ENCODE measurements at regions of chr19 and their contacts with region 1.

Region 1: DNA sequence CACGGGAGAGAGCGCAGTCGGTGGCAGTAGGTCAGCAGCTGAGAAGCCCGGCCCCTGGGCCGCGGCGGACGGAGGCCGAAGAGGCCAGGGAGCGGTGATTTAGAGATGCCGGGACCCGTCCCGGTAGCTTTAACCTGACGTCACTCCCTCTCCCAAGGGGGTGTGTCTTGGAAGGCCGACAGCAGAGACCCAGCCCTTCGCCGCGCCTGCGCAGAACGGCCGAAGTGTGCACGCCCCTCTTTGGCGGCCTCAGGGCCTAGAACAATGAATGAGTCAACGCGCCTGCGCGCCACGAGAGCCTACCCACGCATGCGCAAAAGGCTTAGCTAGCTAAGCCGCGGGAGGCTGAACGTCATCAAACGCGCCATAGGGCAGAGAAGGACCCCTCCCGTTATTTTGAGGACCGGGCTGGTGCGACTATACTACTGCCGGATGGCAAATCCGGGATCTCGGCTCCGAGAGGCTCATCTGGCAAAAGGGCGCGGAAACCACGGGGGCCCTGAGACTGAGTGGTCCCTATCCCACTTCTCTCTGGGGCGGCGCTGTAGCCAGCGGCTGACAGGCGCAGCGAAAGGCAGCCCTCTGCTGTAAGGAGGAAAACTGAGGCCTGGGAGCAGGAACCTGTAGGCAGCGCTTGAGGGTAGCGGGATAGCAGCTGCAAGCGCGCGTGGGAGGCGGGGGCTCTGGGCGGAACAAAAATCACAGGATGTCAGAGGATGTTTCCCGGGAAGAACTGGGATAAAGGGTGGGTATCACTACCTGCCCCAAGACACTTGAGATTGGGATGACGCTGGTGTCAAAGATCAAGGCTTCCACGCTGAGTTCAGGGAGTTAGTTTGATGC is at the starts of genes IRGQ and ZNF576:
- DNase-seq: peak; percentile 100
- H3K4me3 Mint-ChIP-seq: peak within 1 kb of the TSS; percentile 93
- H3K27ac Mint-ChIP-seq: peak within 1 kb of the TSS; percentile 97
- H3K4me1 Mint-ChIP-seq: peaks cover 29% of the 10 kb centered on the region
- H3K27me3 Mint-ChIP-seq: no peaks in the 10 kb centered on the region
- total RNA-seq, gene IRGQ: 17.2 to 18.7 TPM
- total RNA-seq, gene ZNF576: 11.6 to 11.7 TPM

Region 2: DNA sequence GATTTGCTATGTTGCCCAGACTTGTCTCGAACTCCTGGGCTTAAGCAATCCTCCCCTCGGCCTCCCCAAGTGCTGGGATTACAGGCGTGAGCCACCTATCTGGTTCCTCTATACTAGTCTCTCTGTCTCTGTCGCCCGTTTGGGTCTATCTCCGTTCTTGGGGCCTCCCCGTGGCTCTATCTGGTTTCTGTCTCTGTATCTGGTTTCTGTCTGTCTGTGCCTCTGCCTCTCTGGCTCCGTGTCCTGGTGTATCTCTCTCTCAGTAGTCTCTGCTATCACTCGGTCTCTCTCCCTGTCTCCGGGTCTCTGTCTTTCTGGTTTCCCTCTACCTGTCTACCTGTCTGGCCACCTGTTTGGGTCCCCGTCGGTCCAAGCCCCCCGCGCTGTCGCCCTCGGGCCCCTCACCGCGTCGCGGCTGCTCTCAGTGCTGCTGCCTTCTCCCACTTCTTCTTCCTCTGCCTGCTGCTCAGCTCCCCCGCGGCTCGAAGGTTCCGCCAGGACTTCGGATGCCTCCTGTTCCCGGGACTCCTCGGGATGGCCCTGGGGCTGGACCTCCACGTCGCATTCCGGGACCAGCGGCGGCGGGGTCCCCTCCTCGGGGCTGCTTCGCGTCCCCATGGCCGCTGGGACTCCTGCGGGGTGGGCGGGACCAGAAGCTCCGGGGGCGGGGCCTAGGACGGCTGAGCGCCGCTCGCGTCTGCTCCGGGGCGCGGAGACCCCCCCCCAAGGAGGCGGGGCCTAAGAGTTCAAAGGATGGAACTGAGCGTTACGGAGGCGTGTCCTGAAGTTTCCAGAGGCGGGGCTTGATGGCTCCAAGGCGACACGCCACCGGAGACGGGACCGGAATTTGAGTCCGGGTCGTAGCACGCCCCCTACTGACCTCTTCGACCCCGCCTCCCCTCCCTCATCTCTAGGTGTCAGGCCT is 92.5 kb before region 1 on chr19:
- CTCF ChIA-PET with region 1: interaction called, 3 read pairs
- intact Hi-C with region 1: loop called (anchors 1 kb)
- DNase-seq: peak; percentile 99
- H3K4me3 Mint-ChIP-seq: peak overlapping the region; percentile 97
- H3K27ac Mint-ChIP-seq: peak overlapping the region; percentile 92
- H3K4me1 Mint-ChIP-seq: peaks cover 29% of the 10 kb centered on the region
- H3K27me3 Mint-ChIP-seq: no peaks in the 10 kb centered on the region

Region 3: GRCh38 chr19:43532962-43533545 is 63.2 kb before region 1 on chr19 and contains the start of gene ZNF575:
- CTCF ChIA-PET with region 1: interaction called, 24 read pairs
- intact Hi-C with region 1: loop called (anchors 1 kb)
- DNase-seq: peak; percentile 92
- H3K4me3 Mint-ChIP-seq: peak within 1 kb of the TSS; percentile 80
- H3K27ac Mint-ChIP-seq: peak within 1 kb of the TSS; percentile 88
- H3K4me1 Mint-ChIP-seq: peaks cover 19% of the 10 kb centered on the region
- H3K27me3 Mint-ChIP-seq: no peaks in the 10 kb centered on the region
- total RNA-seq, gene ZNF575: 3.1 to 5.2 TPM

Region 4: DNA sequence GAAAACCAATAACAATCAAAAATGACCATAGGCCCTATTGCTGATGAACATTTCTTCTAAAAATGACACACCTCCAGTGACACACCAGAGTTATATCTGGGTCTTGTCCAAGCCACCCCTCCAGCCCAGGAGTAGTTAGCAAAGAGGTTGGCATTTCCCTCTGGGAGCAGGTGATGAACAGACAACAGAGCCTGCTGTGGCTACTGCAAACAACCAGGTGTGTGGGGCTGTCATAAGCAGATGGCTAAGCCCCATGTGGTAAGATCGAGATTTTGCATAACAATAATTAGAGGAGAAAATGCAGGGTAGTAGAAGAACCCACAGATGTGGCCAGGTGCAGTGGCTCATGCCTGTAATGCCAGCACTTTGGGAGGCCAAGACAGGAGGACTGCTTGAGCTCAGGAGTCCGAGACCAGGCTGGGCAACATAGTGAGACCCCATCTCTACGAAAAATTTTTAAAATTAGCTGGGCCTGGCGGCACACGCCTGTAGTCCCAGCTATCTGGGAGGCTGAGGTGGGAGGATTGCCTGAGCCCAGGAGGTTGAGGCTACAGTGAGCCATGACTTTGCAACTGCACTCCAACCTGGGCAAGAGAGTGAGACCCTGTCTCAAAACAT is 25.9 kb before region 1 on chr19:
- CTCF ChIA-PET with region 1: interaction called, 29 read pairs
- intact Hi-C with region 1: loop called (anchors 1 kb)
- DNase-seq: no peak
- H3K4me3 Mint-ChIP-seq: no peak overlapping the region
- H3K27ac Mint-ChIP-seq: no peak overlapping the region
- H3K4me1 Mint-ChIP-seq: peaks cover 22% of the 10 kb centered on the region
- H3K27me3 Mint-ChIP-seq: no peaks in the 10 kb centered on the region

Region 5: GRCh38 chr19:43612374-43612773 is 16.2 kb after region 1 on chr19:
- CTCF ChIA-PET with region 1: no interaction called
- intact Hi-C with region 1: no loop called
- DNase-seq: no peak
- H3K4me3 Mint-ChIP-seq: no peak overlapping the region
- H3K27ac Mint-ChIP-seq: no peak overlapping the region
- H3K4me1 Mint-ChIP-seq: peaks cover 11% of the 10 kb centered on the region
- H3K27me3 Mint-ChIP-seq: no peaks in the 10 kb centered on the region

Region 6: GRCh38 chr19:43668406-43669158 is 72.4 kb after region 1 on chr19:
- CTCF ChIA-PET with region 1: interaction called, 6 read pairs
- intact Hi-C with region 1: loop called (anchors 1 kb)
- DNase-seq: no peak
- H3K4me3 Mint-ChIP-seq: peak overlapping the region; percentile 82
- H3K27ac Mint-ChIP-seq: peak overlapping the region; percentile 77
- H3K4me1 Mint-ChIP-seq: peaks cover 50% of the 10 kb centered on the region
- H3K27me3 Mint-ChIP-seq: no peaks in the 10 kb centered on the region

Region 7: DNA sequence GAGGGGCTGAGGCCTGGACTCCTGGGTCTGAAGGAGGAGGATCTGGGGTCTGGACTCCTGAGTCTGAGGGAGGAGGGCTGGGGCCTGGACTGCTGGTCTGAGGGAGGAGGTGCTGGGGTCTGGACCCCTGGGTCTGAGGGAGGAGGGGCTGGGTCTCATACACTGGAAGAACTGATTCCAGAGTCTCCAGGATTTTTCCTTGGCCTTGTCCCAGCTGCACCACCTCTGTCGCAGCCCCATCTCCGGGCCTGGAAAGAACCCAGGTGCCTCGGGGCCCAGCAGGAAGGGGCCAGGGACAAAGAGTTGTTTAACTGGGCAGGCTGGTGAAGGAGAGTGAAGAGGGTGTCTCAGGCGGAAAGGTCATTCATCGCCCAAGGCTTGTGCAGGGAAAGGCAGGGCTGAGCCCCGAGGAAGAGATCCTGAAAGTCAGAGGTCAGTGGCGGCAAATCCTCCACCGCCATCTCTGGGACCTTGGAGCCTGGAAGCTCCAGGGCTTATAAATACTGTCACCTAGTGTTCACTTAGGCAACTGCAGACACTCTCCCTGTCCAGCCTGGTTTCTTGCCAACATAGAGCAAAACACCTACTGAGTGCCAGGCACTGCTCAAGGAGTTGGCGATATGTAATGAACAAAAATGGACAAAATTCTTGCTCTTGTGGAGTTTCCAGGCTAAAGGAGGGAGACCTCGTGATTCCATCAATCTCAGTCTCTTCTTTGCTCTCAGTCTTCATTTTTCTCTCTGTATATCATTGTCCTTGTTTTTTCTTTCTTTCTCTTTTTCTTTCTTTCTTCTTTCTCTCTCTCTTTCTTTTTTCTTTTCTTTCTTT is 189.0 kb after region 1 on chr19:
- CTCF ChIA-PET with region 1: no interaction called
- intact Hi-C with region 1: loop called (anchors 1 kb)
- DNase-seq: peak; percentile 75
- H3K4me3 Mint-ChIP-seq: peak overlapping the region; percentile 66
- H3K27ac Mint-ChIP-seq: peak overlapping the region; percentile 95
- H3K4me1 Mint-ChIP-seq: peaks cover 39% of the 10 kb centered on the region
- H3K27me3 Mint-ChIP-seq: no peaks in the 10 kb centered on the region

Region 8: DNA sequence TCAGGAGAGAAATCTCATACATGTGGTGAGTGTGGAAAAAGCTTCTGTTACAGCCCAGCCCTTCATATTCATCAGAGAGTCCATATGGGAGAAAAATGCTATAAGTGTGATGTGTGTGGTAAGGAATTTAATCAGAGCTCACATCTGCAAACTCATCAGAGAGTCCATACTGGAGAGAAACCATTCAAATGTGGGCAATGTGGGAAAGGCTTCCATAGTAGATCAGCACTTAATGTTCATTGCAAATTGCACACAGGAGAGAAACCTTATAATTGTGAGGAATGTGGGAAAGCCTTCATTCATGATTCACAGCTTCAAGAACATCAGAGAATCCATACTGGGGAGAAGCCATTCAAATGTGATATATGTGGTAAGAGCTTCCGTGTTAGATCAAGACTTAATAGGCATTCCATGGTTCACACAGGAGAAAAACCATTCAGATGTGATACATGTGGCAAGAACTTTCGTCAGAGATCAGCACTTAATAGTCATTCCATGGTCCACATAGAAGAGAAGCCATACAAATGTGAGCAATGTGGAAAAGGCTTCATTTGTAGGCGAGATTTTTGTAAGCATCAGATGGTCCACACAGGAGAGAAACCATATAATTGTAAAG is 370.0 kb after region 1 on chr19:
- CTCF ChIA-PET with region 1: no interaction called
- intact Hi-C with region 1: no loop called
- DNase-seq: no peak
- H3K4me3 Mint-ChIP-seq: no peak overlapping the region
- H3K27ac Mint-ChIP-seq: no peak overlapping the region
- H3K4me1 Mint-ChIP-seq: no peaks in the 10 kb centered on the region
- H3K27me3 Mint-ChIP-seq: no peaks in the 10 kb centered on the region

Region 9: GRCh38 chr19:44607049-44607448 is 1010.8 kb after region 1 on chr19:
- CTCF ChIA-PET with region 1: no interaction called
- intact Hi-C with region 1: no loop called
- DNase-seq: no peak
- H3K4me3 Mint-ChIP-seq: no peak overlapping the region
- H3K27ac Mint-ChIP-seq: peak overlapping the region; percentile 0
- H3K4me1 Mint-ChIP-seq: peaks cover 16% of the 10 kb centered on the region
- H3K27me3 Mint-ChIP-seq: no peaks in the 10 kb centered on the region

Measured in activated naive CD4-positive, alpha-beta T cell treated with anti-CD3 and anti-CD28 coated beads for 36 hours (primary cell).